Gastrocnemius medialis (tissue), 4 donors: ENCODE measurements at regions of chrX and their contacts with region 1.

Region 1: GRCh38 chrX:47560831-47561652 is at the start of gene ARAF:
- DNase-seq: peak; percentile 96 to 99
- ATAC-seq: peak; percentile 91 to 93
- H3K4me3 ChIP-seq: peak within 1 kb of the TSS; percentile 66 to 74 (median 72)
- H3K27ac ChIP-seq: peak within 1 kb of the TSS; percentile 86 to 98 (median 94)
- H3K4me1 ChIP-seq: peaks cover 3 to 17% of the 10 kb centered on the region in 2 donors
- H3K27me3 ChIP-seq: no peaks in the 10 kb centered on the region
- CTCF ChIP-seq: no peak
- POLR2A ChIP-seq: peak; percentile 29 to 45
- total RNA-seq, gene ARAF: 44.8 to 93.3 (median 66.7) TPM

Region 2: DNA sequence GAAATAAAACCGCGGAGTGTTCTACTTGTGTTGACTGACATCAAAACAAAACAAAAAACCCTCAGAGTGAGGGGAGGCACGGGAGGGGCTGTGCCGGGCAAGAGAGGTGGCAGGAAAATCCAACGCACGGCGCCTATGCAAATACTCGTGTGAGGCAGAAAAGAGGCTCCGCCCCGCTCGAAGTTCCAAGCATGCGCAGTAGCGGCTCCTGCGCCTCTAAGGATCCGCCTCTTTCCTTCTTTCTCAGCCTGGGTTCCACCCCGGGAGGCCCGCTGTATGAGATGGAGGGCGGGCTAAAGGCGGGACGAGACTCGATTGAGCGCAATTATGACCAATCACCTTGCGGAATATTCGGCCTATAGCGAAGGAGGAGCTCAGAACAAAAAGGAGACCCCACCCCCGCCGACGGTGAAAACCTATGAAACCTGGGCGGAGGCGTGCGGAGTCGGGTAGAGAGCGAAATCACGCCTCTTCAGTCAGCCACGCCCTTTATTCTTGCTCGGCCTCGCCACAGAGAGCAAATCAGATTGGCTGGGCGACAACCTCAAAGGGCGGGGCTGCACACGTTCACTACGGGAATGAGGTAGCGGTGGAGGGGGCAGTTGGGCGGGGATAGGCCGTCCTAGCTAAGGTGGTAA is 343.3 kb before region 1 on chrX:
- in situ Hi-C with region 1: no loop called
- intact Hi-C with region 1: loop called (anchors 5 kb)
- DNase-seq: peak; percentile 94 to 98
- ATAC-seq: peak; percentile 82 to 88
- H3K4me3 ChIP-seq: peak overlapping the region; percentile 67 to 75 (median 72)
- H3K27ac ChIP-seq: peak overlapping the region; percentile 92 to 99 (median 96)
- H3K4me1 ChIP-seq: peaks cover 13 to 20% of the 10 kb centered on the region in 2 donors
- H3K27me3 ChIP-seq: no peaks in the 10 kb centered on the region
- CTCF ChIP-seq: no peak
- POLR2A ChIP-seq: no peak

Region 3: GRCh38 chrX:47482512-47483309 is 78.3 kb before region 1 on chrX and contains the start of gene ZNF41:
- in situ Hi-C with region 1: no loop called
- intact Hi-C with region 1: loop called (anchors 2 kb)
- DNase-seq: peak; percentile 67 to 86
- ATAC-seq: peak; percentile 88 to 89
- H3K4me3 ChIP-seq: peak within 1 kb of the TSS; percentile 66 to 81 (median 75)
- H3K27ac ChIP-seq: peak within 1 kb of the TSS; percentile 93 to 97 (median 96)
- H3K4me1 ChIP-seq: peaks cover 8 to 26% of the 10 kb centered on the region in 2 donors
- H3K27me3 ChIP-seq: no peaks in the 10 kb centered on the region
- CTCF ChIP-seq: no peak
- POLR2A ChIP-seq: peak; percentile 45 to 55
- total RNA-seq, gene ZNF41: 8.7 to 14.9 (median 11.7) TPM

Region 4: DNA sequence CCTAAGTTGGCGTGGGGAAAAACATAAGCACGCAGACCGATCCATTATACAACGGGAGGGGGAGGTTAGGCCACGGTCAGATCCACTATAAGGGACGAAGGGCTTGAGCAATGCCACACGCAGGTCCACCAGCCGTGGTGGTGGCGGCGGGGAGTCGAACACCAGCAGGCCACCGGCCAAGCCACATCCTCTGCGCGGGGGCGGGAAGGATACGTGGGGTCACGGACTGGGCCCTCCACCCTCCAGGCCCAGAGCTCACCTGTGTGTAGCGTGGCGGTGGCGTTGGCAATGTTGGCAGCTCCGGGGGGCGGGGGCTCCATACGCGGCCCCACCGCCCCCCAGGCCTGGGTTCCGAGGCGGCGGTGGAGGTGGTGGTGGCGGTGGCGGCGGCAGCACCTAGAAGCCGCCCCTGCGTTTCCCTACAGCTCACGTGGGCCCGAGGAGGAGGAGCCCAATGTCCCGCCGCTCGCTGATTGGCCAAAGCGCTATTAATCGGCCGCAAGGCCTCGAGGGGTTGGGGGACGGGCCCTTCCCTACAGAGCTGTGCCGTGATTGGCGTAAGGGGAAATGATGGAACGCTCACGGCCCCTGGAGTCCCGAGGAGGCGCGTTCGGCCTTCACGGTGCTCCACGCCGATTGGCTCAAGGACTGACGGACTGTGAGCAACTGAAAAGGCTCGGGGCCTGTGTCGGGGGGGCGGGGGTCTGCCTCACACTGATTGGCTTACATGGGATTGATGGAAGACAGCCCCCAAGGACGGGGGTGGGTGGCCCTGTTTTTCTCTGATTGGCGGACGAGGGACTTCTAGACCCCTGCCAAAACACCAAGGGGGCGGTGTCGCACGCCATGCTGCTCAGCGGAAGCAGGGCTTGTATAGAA is 89.4 kb after region 1 on chrX and contains the start of gene ELK1:
- in situ Hi-C with region 1: loop called in 1 of 4 experiments (anchors 10 kb)
- intact Hi-C with region 1: loop called (anchors 2 kb)
- DNase-seq: peak; percentile 95 to 97
- ATAC-seq: peak; percentile 92 to 95
- H3K4me3 ChIP-seq: peak within 1 kb of the TSS; percentile 66 to 79 (median 70)
- H3K27ac ChIP-seq: peak within 1 kb of the TSS; percentile 85 to 94 (median 92)
- H3K4me1 ChIP-seq: peaks cover 5 to 8% of the 10 kb centered on the region in 2 donors
- H3K27me3 ChIP-seq: no peaks in the 10 kb centered on the region
- CTCF ChIP-seq: no peak
- POLR2A ChIP-seq: peak; percentile 72 to 73
- total RNA-seq, gene ELK1: 35.0 to 65.6 (median 58.8) TPM

Region 5: DNA sequence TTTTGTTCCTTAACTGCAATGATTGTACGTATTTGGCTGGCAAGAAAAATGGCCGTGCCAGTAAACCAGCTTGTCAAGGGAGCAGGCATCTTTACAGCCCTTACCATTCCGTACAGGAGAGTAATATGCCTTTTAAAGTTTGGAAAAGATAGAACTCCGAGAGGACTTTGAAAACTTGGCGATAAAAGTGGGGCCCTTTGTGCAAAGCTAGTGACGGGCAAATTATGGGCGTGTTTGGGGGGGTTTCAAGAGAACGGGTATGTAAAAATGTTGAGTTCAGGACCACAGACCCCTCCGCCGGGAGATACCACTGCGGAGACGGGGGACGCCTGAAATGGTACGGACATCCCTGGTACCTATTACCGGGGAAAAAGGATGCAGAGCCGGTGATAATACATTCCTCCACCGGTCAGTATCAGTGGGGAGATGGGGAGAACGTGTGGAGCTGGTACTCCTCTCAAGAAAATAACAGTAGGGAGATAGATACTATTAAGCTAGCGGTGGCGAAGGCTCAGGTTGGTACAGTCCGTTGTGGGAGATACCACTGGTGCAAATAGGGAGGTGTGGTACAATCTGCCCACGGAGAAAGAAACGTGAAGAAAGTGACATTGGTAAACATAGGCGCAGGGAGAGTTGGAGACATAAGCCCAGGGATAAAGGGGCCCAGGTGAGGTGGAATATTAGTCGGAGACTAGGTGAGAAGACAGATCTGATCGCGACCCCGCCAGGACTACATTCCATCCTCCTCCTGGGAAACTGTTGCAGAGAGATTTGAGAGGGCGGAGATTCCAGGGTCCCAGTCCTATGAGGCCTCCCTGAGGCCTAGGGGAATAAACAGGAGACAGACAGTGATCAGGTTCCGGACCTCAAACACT is 460.2 kb after region 1 on chrX:
- in situ Hi-C with region 1: no loop called
- intact Hi-C with region 1: loop called (anchors 5 kb)
- DNase-seq: peak; percentile 32 to 60
- ATAC-seq: peak; percentile 90
- H3K4me3 ChIP-seq: peak overlapping the region; percentile 61 to 68 (median 64)
- H3K27ac ChIP-seq: peak overlapping the region; percentile 82 to 91 (median 86)
- H3K4me1 ChIP-seq: peaks cover 0 to 4% of the 10 kb centered on the region in 2 donors
- H3K27me3 ChIP-seq: no peaks in the 10 kb centered on the region
- CTCF ChIP-seq: no peak
- POLR2A ChIP-seq: no peak